ENCODE measurements at regions of chrX and their contacts with region 1.

Region 1: GRCh38 chrX:74133156-74133796 is 170.7 kb upstream of the ZCCHC13 start:
- DNase-seq: peak; percentile 30
- H3K4me3 Mint-ChIP-seq: no peak overlapping the region
- H3K27ac Mint-ChIP-seq: no peak overlapping the region
- H3K4me1 Mint-ChIP-seq: no peaks in the 10 kb centered on the region
- H3K27me3 Mint-ChIP-seq: no peaks in the 10 kb centered on the region
- CTCF ChIP-seq: peak; percentile 51

Region 2: DNA sequence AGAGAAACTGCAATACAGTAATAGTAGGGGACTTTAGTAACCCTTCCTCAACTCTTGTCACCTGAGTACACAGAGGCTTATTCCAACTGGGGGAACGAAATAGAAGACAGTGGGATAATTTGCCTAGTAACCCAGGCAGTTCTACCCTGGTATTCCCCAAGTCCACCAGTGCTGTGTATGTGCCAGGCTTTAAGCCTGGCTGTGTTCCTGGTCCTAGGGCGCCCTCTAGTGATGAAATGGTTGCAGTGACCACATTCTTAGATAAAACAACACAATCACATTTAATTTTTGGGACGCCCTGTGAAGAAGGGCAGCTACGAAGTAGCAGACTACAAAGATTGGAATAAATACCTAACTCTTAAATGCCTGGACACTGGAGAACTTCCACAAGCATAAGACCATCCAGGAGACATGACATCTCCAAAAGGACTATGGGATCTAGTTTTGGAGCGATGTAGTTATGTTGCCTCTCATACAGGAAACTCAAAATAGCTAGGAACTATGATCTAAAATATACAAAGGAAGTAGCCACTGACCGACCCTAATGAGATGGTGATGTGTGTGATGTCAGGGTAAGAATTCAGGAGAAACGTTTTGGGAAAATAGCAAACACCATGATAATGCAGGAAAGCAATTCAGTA is 117.8 kb before region 1 on chrX:
- CTCF ChIA-PET with region 1: no interaction called
- intact Hi-C with region 1: loop called (anchors 1 kb)
- DNase-seq: peak; percentile 59
- H3K4me3 Mint-ChIP-seq: no peak overlapping the region
- H3K27ac Mint-ChIP-seq: no peak overlapping the region
- H3K4me1 Mint-ChIP-seq: peaks cover 11% of the 10 kb centered on the region
- H3K27me3 Mint-ChIP-seq: no peaks in the 10 kb centered on the region
- CTCF ChIP-seq: peak; percentile 69